GM12878 (cell line): ENCODE measurements at regions of chr2 and their contacts with region 1.

Region 1: GRCh38 chr2:230068016-230068650 is 591 bp downstream of the SLC16A14 start:
- DNase-seq: no peak
- ATAC-seq: peak; percentile 66
- H3K4me3 ChIP-seq: peak overlapping the region; percentile 82
- H3K27ac ChIP-seq: peak overlapping the region; percentile 56; the same call in 1 of the 2 replicates
- H3K4me1 ChIP-seq: peaks cover 5% of the 10 kb centered on the region
- H3K27me3 ChIP-seq: peaks cover 0 to 2% of the 10 kb centered on the region in 2 experiments; a peak in 1 of 4 replicates
- CTCF ChIP-seq: peak; percentile 2 to 15 (median 12); a peak in 1 of 6 replicates
- EP300 ChIP-seq: no peak
- POLR2A ChIP-seq: peak; percentile 48
- RAD21 ChIP-seq: no peak

Region 2: GRCh38 chr2:229955663-229956062 is 112.5 kb before region 1 on chr2:
- CTCF ChIA-PET with region 1: no interaction called
- POLR2A ChIA-PET with region 1: no interaction called
- RAD21 ChIA-PET with region 1: no interaction called
- SMC1A ChIA-PET with region 1: no interaction called
- in situ Hi-C with region 1: no loop called
- intact Hi-C with region 1: no loop called
- DNase-seq: no peak
- ATAC-seq: no peak
- H3K4me3 ChIP-seq: no peak overlapping the region
- H3K27ac ChIP-seq: no peak overlapping the region
- H3K4me1 ChIP-seq: no peaks in the 10 kb centered on the region
- H3K27me3 ChIP-seq: no peaks in the 10 kb centered on the region
- CTCF ChIP-seq: no peak
- EP300 ChIP-seq: no peak
- POLR2A ChIP-seq: no peak
- RAD21 ChIP-seq: no peak

Region 3: DNA sequence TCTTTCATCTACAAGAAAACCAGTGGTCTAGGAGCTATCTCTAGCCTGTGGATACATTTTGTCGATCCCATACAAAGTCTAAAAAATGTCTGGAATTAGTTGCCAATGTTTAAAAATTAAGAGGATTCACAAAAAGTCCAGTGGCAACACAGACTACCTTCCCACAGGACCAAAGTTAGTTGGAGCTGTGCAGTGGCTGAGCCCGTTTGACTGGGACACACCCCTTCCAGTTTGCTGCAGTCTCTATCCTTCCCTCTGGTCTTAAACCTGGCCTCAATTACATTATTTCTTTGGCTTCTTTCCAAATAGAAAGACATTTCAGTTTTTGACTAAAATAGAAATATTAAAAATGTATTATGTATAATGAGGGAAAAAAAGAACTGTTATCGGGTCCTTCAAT is 18.0 kb before region 1 on chr2:
- CTCF ChIA-PET with region 1: interaction called, 18 read pairs
- POLR2A ChIA-PET with region 1: no interaction called
- RAD21 ChIA-PET with region 1: no interaction called
- SMC1A ChIA-PET with region 1: interaction called, 7 read pairs
- in situ Hi-C with region 1: no loop called
- intact Hi-C with region 1: no loop called
- DNase-seq: no peak
- ATAC-seq: no peak
- H3K4me3 ChIP-seq: no peak overlapping the region
- H3K27ac ChIP-seq: no peak overlapping the region
- H3K4me1 ChIP-seq: no peaks in the 10 kb centered on the region
- H3K27me3 ChIP-seq: no peaks in the 10 kb centered on the region
- CTCF ChIP-seq: no peak
- EP300 ChIP-seq: no peak
- POLR2A ChIP-seq: no peak
- RAD21 ChIP-seq: no peak

Region 4: DNA sequence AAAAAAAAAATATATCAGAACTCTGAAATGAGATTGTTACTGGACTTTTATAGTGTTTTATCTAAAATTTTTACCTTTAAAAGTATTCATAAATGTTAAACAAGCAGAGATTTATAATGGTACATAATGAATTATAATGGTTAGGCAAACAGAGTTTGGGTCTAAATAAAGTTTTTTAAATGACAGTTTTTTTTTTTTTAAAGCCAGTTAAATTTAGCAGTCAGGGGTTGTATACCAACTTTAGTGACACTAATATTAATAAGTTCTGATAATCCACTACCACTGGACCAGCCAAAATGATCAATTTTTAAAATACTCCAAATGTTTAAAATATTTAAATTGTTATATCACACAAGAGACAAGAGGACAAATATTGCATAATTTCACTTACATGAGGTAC is 10.1 kb before region 1 on chr2:
- CTCF ChIA-PET with region 1: interaction called, 10 read pairs
- POLR2A ChIA-PET with region 1: interaction called, 3 read pairs
- RAD21 ChIA-PET with region 1: no interaction called
- SMC1A ChIA-PET with region 1: interaction called, 7 read pairs
- in situ Hi-C with region 1: no loop called
- intact Hi-C with region 1: no loop called
- DNase-seq: no peak
- ATAC-seq: no peak
- H3K4me3 ChIP-seq: no peak overlapping the region
- H3K27ac ChIP-seq: no peak overlapping the region
- H3K4me1 ChIP-seq: no peaks in the 10 kb centered on the region
- H3K27me3 ChIP-seq: no peaks in the 10 kb centered on the region
- CTCF ChIP-seq: no peak
- EP300 ChIP-seq: no peak
- POLR2A ChIP-seq: no peak
- RAD21 ChIP-seq: no peak

Region 5: GRCh38 chr2:230160112-230160660 is 92.1 kb after region 1 on chr2:
- CTCF ChIA-PET with region 1: interaction called, 65 read pairs
- POLR2A ChIA-PET with region 1: no interaction called
- RAD21 ChIA-PET with region 1: interaction called, 18 read pairs
- SMC1A ChIA-PET with region 1: interaction called, 32 read pairs
- in situ Hi-C with region 1: no loop called
- intact Hi-C with region 1: loop called (anchors 2 kb)
- DNase-seq: peak; percentile 9
- ATAC-seq: peak; percentile 81
- H3K4me3 ChIP-seq: no peak overlapping the region
- H3K27ac ChIP-seq: no peak overlapping the region
- H3K4me1 ChIP-seq: no peaks in the 10 kb centered on the region
- H3K27me3 ChIP-seq: no peaks in the 10 kb centered on the region
- CTCF ChIP-seq: peak; percentile 63 to 70 (median 65)
- EP300 ChIP-seq: no peak
- POLR2A ChIP-seq: no peak
- RAD21 ChIP-seq: peak; percentile 86